CD4-positive, alpha-beta T cell (primary cell): ENCODE measurements at regions of chr16 and their contacts with region 1.

Region 1: GRCh38 chr16:75464130-75464918 is at the start of gene TMEM170A:
- DNase-seq: peak; percentile 97 to 100 (median 99)
- ATAC-seq: peak; percentile 86
- H3K4me3 ChIP-seq: peak within 1 kb of the TSS; percentile 87
- H3K4me3 Mint-ChIP-seq: peak within 1 kb of the TSS; percentile 96
- H3K27ac ChIP-seq: peak within 1 kb of the TSS; percentile 88 to 99
- H3K27ac Mint-ChIP-seq: peak within 1 kb of the TSS; percentile 95
- H3K4me1 ChIP-seq: peaks cover 40% of the 10 kb centered on the region
- H3K4me1 Mint-ChIP-seq: peaks cover 47% of the 10 kb centered on the region
- H3K27me3 ChIP-seq: no peaks in the 10 kb centered on the region
- H3K27me3 Mint-ChIP-seq: no peaks in the 10 kb centered on the region
- CTCF ChIP-seq: peak; percentile 100
- total RNA-seq, gene TMEM170A: 34.3 to 37.8 TPM

Region 2: DNA sequence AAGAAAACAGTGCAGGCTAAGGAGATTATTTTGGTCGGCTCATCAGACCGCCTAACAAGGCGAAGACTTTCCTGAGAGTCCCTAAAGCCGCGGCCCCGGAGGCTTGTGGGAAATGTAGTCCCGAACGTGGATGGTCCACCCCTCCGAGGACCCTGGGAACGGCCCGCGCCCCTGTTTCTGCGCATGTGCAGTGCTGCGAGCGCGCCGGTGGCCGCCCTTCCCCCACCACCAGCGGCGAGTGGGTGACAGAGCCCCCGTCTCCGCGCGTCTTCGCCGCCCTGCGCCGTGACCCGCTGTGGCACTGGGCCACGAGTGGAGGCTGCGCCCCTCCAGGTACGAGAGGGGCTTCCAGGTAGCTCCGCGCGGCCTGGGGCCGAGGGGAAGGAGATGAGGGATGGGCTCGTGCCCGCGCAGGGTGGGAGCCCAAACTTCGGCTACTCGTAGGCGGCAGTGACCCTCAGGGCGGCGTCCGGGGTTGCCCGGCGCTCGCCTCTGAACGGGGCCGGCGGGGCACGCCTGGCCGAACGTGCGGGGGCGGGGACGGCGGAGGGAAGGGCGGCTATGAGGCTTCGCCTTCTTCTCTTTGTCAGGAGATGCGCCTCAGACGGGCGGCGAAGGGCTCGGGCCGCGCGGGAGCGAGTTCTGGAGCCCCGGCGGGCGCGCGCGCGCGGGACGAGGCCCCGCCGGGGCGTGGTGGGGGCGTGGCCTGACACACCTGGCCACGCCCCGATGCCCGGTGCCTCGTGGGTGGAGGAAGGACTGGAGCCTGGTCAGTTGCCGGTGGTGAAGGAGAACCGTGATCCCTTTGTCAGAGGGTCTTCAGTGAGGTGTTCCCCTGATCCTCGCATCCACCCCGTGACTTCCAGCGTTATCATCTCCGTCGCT is 315.8 kb before region 1 on chr16 and contains the start of gene ZFP1:
- CTCF ChIA-PET with region 1: no interaction called
- POLR2A ChIA-PET with region 1: no interaction called
- intact Hi-C with region 1: loop called in 1 of 2 experiments (anchors 2 kb)
- DNase-seq: peak; percentile 91 to 96 (median 93)
- ATAC-seq: peak; percentile 91
- H3K4me3 ChIP-seq: peak within 1 kb of the TSS; percentile 82
- H3K4me3 Mint-ChIP-seq: peak within 1 kb of the TSS; percentile 94
- H3K27ac ChIP-seq: peak within 1 kb of the TSS; percentile 80 to 88
- H3K27ac Mint-ChIP-seq: peak within 1 kb of the TSS; percentile 88
- H3K4me1 ChIP-seq: peaks cover 9% of the 10 kb centered on the region
- H3K4me1 Mint-ChIP-seq: peaks cover 22% of the 10 kb centered on the region
- H3K27me3 ChIP-seq: no peaks in the 10 kb centered on the region
- H3K27me3 Mint-ChIP-seq: no peaks in the 10 kb centered on the region
- CTCF ChIP-seq: no peak
- total RNA-seq, gene ZFP1: 6.2 to 7.5 TPM

Region 3: GRCh38 chr16:75420987-75421819 is 43.1 kb before region 1 on chr16:
- CTCF ChIA-PET with region 1: interaction called, 5 read pairs
- POLR2A ChIA-PET with region 1: interaction called, 3 read pairs
- intact Hi-C with region 1: loop called in 1 of 2 experiments (anchors 5 kb)
- DNase-seq: peak in 9 of 14 experiments; percentile 8 to 55 (median 32)
- ATAC-seq: peak; percentile 49
- H3K4me3 ChIP-seq: peak overlapping the region; percentile 2
- H3K4me3 Mint-ChIP-seq: peak overlapping the region; percentile 28
- H3K27ac ChIP-seq: no peak overlapping the region
- H3K27ac Mint-ChIP-seq: peak overlapping the region; percentile 52
- H3K4me1 ChIP-seq: peaks cover 5% of the 10 kb centered on the region
- H3K4me1 Mint-ChIP-seq: peaks cover 28% of the 10 kb centered on the region
- H3K27me3 ChIP-seq: no peaks in the 10 kb centered on the region
- H3K27me3 Mint-ChIP-seq: no peaks in the 10 kb centered on the region
- CTCF ChIP-seq: no peak

Region 4: DNA sequence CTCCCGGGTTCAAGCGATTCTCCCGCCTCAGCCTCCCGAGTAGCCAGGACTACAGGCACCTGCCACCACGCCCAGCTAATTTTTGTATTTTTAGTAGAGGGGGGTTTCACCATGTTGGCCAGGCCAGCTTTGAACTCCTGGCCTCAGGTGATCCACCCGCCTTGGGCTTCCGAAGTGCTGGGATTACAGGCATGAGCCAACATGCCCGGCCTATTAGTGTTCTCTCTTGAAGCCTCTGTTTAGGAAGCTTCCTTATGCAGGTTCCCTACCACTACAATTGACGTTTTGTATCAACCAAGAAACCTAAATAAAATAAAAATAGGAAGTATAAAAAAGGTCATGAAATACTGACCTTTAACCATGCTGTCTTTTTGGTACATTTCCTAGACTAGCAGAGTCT is 55.6 kb after region 1 on chr16:
- CTCF ChIA-PET with region 1: interaction called, 30 read pairs
- POLR2A ChIA-PET with region 1: interaction called, 6 read pairs
- intact Hi-C with region 1: loop called (anchors 2 kb)
- DNase-seq: no peak
- ATAC-seq: no peak
- H3K4me3 ChIP-seq: no peak overlapping the region
- H3K4me3 Mint-ChIP-seq: no peak overlapping the region
- H3K27ac ChIP-seq: no peak overlapping the region
- H3K27ac Mint-ChIP-seq: no peak overlapping the region
- H3K4me1 ChIP-seq: peaks cover 12% of the 10 kb centered on the region
- H3K4me1 Mint-ChIP-seq: peaks cover 14% of the 10 kb centered on the region
- H3K27me3 ChIP-seq: no peaks in the 10 kb centered on the region
- H3K27me3 Mint-ChIP-seq: no peaks in the 10 kb centered on the region
- CTCF ChIP-seq: no peak

Region 5: DNA sequence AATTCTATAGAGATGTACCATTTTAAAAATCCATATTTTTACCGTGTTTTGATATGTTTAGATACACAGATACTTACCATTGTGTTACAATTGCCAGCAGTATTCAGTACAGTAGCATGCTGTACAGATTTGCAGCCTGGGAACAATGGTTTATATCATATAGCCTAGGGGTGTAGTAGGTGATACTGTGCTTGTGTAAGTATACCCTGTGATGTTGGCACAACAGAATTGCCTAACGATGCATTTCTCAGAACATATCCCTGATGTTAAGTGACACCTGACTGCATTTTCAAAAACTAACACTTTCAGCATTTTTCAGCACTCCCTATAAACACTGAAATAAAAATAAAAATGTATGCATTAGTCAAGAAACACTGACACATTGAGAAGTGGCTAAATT is 668.1 kb after region 1 on chr16:
- CTCF ChIA-PET with region 1: no interaction called
- POLR2A ChIA-PET with region 1: no interaction called
- intact Hi-C with region 1: no loop called
- DNase-seq: no peak
- ATAC-seq: no peak
- H3K4me3 ChIP-seq: no peak overlapping the region
- H3K4me3 Mint-ChIP-seq: no peak overlapping the region
- H3K27ac ChIP-seq: no peak overlapping the region
- H3K27ac Mint-ChIP-seq: no peak overlapping the region
- H3K4me1 ChIP-seq: no peaks in the 10 kb centered on the region
- H3K4me1 Mint-ChIP-seq: no peaks in the 10 kb centered on the region
- H3K27me3 ChIP-seq: no peaks in the 10 kb centered on the region
- H3K27me3 Mint-ChIP-seq: no peaks in the 10 kb centered on the region
- CTCF ChIP-seq: no peak

Region 6: GRCh38 chr16:77190478-77191258 is 1726.3 kb after region 1 on chr16 and contains the start of gene MON1B:
- CTCF ChIA-PET with region 1: no interaction called
- POLR2A ChIA-PET with region 1: no interaction called
- intact Hi-C with region 1: loop called in 1 of 2 experiments (anchors 10 kb)
- DNase-seq: peak; percentile 88 to 99 (median 92)
- ATAC-seq: peak; percentile 92
- H3K4me3 ChIP-seq: peak within 1 kb of the TSS; percentile 98
- H3K4me3 Mint-ChIP-seq: peak within 1 kb of the TSS; percentile 92
- H3K27ac ChIP-seq: peak within 1 kb of the TSS; percentile 95 to 99
- H3K27ac Mint-ChIP-seq: peak within 1 kb of the TSS; percentile 97
- H3K4me1 ChIP-seq: peaks cover 44% of the 10 kb centered on the region
- H3K4me1 Mint-ChIP-seq: peaks cover 50% of the 10 kb centered on the region
- H3K27me3 ChIP-seq: no peaks in the 10 kb centered on the region
- H3K27me3 Mint-ChIP-seq: no peaks in the 10 kb centered on the region
- CTCF ChIP-seq: no peak
- total RNA-seq, gene MON1B: 52.3 to 52.6 TPM